Breast epithelium (tissue), 4 donors: ENCODE measurements at regions of chr5 and their contacts with region 1.

Region 1: GRCh38 chr5:13910637-13911288 is 33.7 kb downstream of the DNAH5 start:
- DNase-seq: no peak
- H3K4me3 ChIP-seq: no peak overlapping the region
- H3K27ac ChIP-seq: no peak overlapping the region
- H3K4me1 ChIP-seq: no peaks in the 10 kb centered on the region
- H3K27me3 ChIP-seq: no peaks in the 10 kb centered on the region
- CTCF ChIP-seq: no peak
- POLR2A ChIP-seq: no peak

Region 2: GRCh38 chr5:15885156-15885555 is 1974.4 kb after region 1 on chr5:
- intact Hi-C with region 1: loop called (anchors 10 kb)
- DNase-seq: no peak
- H3K4me3 ChIP-seq: no peak overlapping the region
- H3K27ac ChIP-seq: no peak overlapping the region
- H3K4me1 ChIP-seq: no peaks in the 10 kb centered on the region
- H3K27me3 ChIP-seq: no peaks in the 10 kb centered on the region
- CTCF ChIP-seq: no peak
- POLR2A ChIP-seq: no peak